Sigmoid colon (tissue), 7 donors: ENCODE measurements at regions of chr4 and their contacts with region 1.

Region 1: DNA sequence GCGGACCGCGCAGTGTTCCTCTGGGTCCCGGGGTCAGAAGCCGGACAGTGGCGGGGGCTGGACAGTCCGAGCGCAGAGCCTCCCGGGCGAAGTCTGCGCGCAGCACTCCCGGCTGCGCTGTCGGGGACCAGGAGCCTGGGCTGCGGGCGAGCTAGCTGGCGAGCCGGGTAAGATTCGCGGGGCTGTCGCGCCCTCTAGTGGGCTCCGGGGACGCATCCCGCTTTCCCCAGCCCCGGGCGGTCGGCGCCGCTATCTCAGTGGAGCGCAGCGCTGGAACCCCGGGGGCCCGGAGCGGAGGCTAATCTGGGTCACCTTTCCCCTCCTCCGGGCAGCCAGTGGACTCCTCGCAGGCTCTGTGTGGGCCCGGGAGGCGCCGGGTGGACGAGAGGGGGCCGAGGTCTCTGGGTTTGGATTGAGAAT is 4.2 kb downstream of the PDGFRA start:
- DNase-seq: peak; percentile 90
- H3K4me3 ChIP-seq: peak overlapping the region; percentile 39 to 54 (median 49)
- H3K27ac ChIP-seq: peak overlapping the region; percentile 57 to 75 (median 66)
- H3K4me1 ChIP-seq: peaks cover 0 to 54% (median 47%) of the 10 kb centered on the region in 4 donors
- H3K27me3 ChIP-seq: peaks cover 38 to 55% (median 47%) of the 10 kb centered on the region in 3 donors
- CTCF ChIP-seq: peak; percentile 59 to 80 (median 63)
- EP300 ChIP-seq: no peak
- POLR2A ChIP-seq: no peak

Region 2: GRCh38 chr4:52376132-52376704 is 1857.1 kb before region 1 on chr4:
- intact Hi-C with region 1: loop called (anchors 5 kb)
- DNase-seq: no peak
- H3K4me3 ChIP-seq: no peak overlapping the region
- H3K27ac ChIP-seq: no peak overlapping the region
- H3K4me1 ChIP-seq: no peaks in the 10 kb centered on the region
- H3K27me3 ChIP-seq: no peaks in the 10 kb centered on the region
- CTCF ChIP-seq: peak in 3 of 4 experiments; percentile 22 to 60 (median 50)
- EP300 ChIP-seq: no peak
- POLR2A ChIP-seq: no peak

Region 3: DNA sequence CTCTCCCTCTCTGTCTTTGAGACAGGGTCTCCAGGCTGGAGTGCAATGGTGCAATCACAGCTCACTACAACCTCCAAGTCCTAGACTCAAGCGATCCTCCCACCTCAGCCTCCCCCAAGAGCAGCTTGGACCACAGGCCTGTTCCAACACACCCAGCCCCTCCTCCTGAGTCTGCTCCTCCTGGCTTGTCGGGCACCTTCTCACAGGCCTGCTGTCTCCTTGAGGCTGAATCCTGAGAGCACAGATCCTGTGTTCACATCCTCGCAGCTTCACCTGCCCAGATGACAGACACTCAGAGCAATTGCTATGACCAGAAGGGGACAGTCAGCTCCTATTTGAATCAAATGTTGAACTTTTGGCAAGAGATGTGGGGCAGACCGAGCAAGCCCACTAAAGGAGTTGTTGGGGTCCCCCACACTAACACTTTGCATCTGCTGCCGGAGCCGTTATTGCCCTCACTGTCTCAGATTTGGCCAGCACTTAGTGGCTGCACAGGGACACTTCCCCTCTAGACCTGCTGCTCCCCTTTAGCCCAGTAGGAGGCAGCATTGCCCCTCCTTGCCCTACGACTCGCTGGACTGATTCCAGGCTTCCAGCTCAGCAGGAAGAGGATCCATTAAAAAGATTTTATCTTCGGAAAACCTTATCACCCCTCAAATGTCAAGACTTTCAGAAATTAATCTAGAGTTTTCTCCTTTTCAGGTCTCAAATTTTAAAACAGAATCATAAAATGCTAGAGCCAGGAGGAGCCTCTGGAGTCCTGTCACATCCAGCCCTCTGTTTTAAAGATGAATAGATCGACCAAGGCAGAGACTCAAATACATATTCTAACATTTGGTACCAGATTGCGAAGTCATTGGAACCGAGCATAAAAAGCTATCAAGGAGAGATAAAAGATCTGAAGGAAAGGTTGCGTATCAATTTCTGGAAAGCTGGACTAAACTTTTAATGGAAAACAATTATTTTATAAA is 1687.9 kb before region 1 on chr4:
- intact Hi-C with region 1: loop called (anchors 5 kb)
- DNase-seq: peak; percentile 86
- H3K4me3 ChIP-seq: no peak overlapping the region
- H3K27ac ChIP-seq: no peak overlapping the region
- H3K4me1 ChIP-seq: no peaks in the 10 kb centered on the region
- H3K27me3 ChIP-seq: no peaks in the 10 kb centered on the region
- CTCF ChIP-seq: peak; percentile 65 to 92 (median 80)
- EP300 ChIP-seq: no peak
- POLR2A ChIP-seq: no peak

Region 4: GRCh38 chr4:53196882-53197771 is 1036.2 kb before region 1 on chr4:
- intact Hi-C with region 1: loop called (anchors 2 kb)
- DNase-seq: no peak
- H3K4me3 ChIP-seq: no peak overlapping the region
- H3K27ac ChIP-seq: peak overlapping the region in 1 of 4 donors; percentile 11
- H3K4me1 ChIP-seq: peaks cover 0 to 4% (median 0%) of the 10 kb centered on the region in 4 donors
- H3K27me3 ChIP-seq: no peaks in the 10 kb centered on the region
- CTCF ChIP-seq: peak; percentile 22 to 61 (median 52)
- EP300 ChIP-seq: no peak
- POLR2A ChIP-seq: no peak

Region 5: DNA sequence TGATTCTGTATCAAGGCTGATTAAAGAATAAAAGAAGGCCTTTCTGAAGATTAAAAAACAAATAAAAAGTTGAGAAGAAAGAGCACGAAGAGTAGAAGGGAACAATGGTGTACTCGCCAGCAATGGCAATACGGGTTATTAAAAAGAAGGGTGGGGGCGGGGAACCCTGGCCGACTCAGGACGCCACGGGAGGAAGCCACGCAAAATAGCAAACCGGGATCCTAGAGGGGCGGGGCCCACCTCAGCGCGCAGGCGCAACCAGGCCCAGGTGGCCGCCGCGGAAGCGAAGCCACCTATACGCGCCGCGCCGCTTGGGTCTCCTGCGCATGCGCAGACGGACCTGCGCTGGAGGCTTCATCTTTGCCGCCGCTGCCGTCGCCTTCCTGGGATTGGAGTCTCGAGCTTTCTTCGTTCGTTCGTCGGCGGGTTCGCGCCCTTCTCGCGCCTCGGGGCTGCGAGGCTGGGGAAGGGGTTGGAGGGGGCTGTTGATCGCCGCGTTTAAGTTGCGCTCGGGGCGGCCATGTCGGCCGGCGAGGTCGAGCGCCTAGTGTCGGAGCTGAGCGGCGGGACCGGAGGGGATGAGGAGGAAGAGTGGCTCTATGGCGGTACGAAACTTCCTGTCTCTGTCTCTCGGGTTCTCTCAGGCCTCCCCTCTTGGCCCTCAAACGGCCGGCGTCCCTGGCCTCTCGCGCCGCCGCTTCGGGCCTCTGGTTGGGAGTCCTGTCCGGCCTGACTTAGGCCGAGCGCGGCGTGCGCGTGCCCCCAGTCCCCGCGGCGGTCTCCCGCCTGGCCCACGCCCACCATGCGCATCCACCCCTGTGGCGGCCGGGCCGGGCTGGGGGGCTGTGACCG is 855.7 kb before region 1 on chr4 and contains the start of gene FIP1L1:
- intact Hi-C with region 1: loop called (anchors 5 kb)
- DNase-seq: peak; percentile 97
- H3K4me3 ChIP-seq: peak within 1 kb of the TSS; percentile 81 to 94 (median 88)
- H3K27ac ChIP-seq: peak within 1 kb of the TSS; percentile 84 to 90 (median 88)
- H3K4me1 ChIP-seq: peaks cover 0 to 26% (median 16%) of the 10 kb centered on the region in 4 donors
- H3K27me3 ChIP-seq: no peaks in the 10 kb centered on the region
- CTCF ChIP-seq: no peak
- EP300 ChIP-seq: no peak
- POLR2A ChIP-seq: peak; percentile 68 to 79
- total RNA-seq, gene FIP1L1: 33.7 to 47.7 (median 43.7) TPM

Region 6: DNA sequence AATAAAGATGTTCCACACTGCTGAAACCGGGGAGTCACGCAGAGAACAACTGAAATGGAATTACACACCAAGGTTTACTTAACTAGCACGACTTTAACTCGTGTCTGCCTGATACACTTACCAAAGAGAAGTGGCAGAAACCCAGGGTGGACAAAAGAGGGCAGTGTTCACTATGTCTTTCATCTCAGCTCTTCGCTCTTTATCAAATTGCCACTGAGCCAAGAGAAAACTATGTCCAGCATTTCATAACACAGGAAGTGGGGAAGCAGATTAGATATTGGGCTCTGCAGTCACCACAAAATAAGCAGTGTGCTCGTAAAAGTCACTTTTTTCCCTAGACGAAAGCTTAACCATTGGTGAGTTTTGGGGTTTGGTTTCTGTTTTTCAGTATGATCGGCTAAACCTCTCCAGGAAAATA is 324.6 kb before region 1 on chr4:
- intact Hi-C with region 1: loop called (anchors 2 kb)
- DNase-seq: peak; percentile 72
- H3K4me3 ChIP-seq: peak overlapping the region in 2 of 4 donors; percentile 12
- H3K27ac ChIP-seq: peak overlapping the region in 3 of 4 donors; percentile 5 to 29 (median 21)
- H3K4me1 ChIP-seq: peaks cover 0 to 23% (median 16%) of the 10 kb centered on the region in 4 donors
- H3K27me3 ChIP-seq: peaks cover 0 to 55% (median 16%) of the 10 kb centered on the region in 3 donors
- CTCF ChIP-seq: peak; percentile 25 to 47 (median 39)
- EP300 ChIP-seq: no peak
- POLR2A ChIP-seq: no peak

Region 7: DNA sequence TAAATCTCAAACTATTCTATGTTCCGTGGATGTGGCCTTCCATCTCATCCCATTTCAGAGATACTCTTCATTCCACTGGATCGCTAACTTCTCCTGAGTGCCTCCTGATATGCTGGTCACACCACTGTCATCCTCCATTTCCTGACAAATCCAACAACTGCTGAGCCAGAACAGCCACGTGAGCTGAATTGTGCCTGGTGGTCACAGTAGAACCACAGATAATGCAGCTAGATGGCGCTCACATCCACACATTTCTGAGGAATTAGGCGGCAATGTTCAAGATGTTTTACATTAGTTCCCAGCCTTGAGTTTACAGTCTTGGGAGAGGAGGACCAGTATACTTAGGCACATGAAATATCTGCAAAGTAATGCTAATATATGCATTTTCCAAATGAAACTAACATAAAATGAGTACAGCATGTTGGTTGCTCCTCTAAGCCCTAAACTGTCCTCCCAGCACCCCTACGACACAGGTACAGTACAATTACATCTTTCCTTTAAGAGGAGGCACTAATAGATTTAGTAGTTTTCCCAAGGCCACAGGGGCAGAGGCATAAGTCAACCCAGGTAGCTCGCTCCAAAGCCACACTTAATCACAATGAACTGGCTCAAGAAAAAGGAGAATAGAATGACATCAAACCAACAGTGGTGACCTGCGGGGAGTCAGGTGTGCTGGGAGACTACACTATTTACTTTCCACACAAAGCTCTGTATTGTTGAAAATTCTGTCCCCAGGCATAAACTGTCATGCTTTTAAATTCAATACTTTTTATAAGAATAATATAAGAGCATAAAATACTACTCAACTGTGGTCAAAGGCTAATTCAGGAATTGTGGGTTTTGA is 303.1 kb before region 1 on chr4:
- intact Hi-C with region 1: loop called (anchors 2 kb)
- DNase-seq: peak; percentile 82
- H3K4me3 ChIP-seq: no peak overlapping the region
- H3K27ac ChIP-seq: no peak overlapping the region
- H3K4me1 ChIP-seq: peaks cover 0 to 6% (median 0%) of the 10 kb centered on the region in 4 donors
- H3K27me3 ChIP-seq: peaks cover 0 to 3% (median 0%) of the 10 kb centered on the region in 3 donors
- CTCF ChIP-seq: peak; percentile 40 to 78 (median 64)
- EP300 ChIP-seq: no peak
- POLR2A ChIP-seq: no peak

Region 8: GRCh38 chr4:54091637-54092404 is 141.5 kb before region 1 on chr4:
- intact Hi-C with region 1: no loop called
- DNase-seq: peak; percentile 89
- H3K4me3 ChIP-seq: peak overlapping the region; percentile 21 to 51 (median 42)
- H3K27ac ChIP-seq: no peak overlapping the region
- H3K4me1 ChIP-seq: peaks cover 0 to 18% (median 17%) of the 10 kb centered on the region in 4 donors
- H3K27me3 ChIP-seq: peaks cover 3 to 61% (median 45%) of the 10 kb centered on the region in 3 donors
- CTCF ChIP-seq: no peak
- EP300 ChIP-seq: no peak
- POLR2A ChIP-seq: no peak